CD8-positive, alpha-beta T cell (primary cell): ENCODE measurements at regions of chr10 and their contacts with region 1.

Region 1: DNA sequence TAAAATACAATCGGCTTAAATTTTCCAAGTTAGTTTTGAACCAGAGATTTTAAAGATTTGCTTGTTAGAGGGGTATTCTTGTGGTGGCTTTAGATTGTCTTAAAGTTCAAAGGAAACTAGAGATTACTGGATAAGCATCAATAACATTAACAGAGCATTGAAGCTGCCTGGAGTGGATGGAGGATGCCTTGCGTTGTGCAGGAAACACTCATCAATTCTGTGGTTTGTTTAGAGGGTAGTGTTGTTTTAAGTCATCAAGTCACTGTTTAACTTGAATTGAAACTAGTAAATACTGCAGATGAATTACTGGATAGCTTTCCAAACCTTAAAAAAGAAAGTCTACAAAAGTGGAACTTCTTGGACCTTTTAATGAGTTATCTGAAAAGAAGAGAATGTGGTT is 218.6 kb downstream of the CELF2 start:
- DNase-seq: peak in 3 of 9 experiments; percentile 47 to 70 (median 48)
- ATAC-seq: peak; percentile 62
- H3K4me3 ChIP-seq: no peak overlapping the region
- H3K4me3 Mint-ChIP-seq: peak overlapping the region; percentile 42
- H3K27ac ChIP-seq: peak overlapping the region; percentile 14 to 67
- H3K27ac Mint-ChIP-seq: peak overlapping the region; percentile 91
- H3K4me1 ChIP-seq: peaks cover 78% of the 10 kb centered on the region
- H3K4me1 Mint-ChIP-seq: peaks cover 96% of the 10 kb centered on the region
- H3K27me3 ChIP-seq: no peaks in the 10 kb centered on the region
- H3K27me3 Mint-ChIP-seq: no peaks in the 10 kb centered on the region
- CTCF ChIP-seq: no peak

Region 2: DNA sequence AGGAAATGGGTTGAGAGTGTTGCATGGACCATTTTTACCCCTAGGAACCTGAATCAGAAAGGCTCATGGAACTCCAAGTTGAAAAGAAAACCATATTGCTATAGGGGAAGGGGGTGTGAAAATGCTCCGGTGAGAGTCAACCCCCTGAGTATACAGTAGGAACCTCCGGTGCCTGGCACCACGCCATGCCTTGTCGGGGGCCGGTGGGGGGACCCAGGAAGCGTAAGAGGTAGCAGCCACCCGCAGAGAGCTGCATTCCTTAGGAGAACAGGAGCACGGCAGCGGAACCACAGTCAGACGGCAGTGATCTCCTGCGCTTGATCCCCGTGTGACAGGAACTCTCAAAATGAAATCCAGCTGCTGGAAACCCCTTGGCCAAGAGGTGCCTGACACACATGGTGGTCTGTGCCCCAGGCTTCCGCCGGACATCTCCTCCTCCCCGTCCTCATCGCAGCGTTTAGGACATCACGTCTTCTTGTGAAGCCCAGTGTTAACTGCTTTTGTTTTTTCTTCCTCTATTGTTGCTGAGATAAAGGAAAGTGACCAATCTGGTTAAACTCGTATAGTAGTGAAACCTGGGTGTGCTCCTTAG is 31.8 kb before region 1 on chr10:
- CTCF ChIA-PET with region 1: no interaction called
- POLR2A ChIA-PET with region 1: no interaction called
- intact Hi-C with region 1: loop called in 1 of 2 experiments (anchors 5 kb)
- DNase-seq: peak in 4 of 9 experiments; percentile 35 to 64 (median 48)
- ATAC-seq: peak; percentile 37
- H3K4me3 ChIP-seq: no peak overlapping the region
- H3K4me3 Mint-ChIP-seq: peak overlapping the region; percentile 35
- H3K27ac ChIP-seq: peak overlapping the region in 1 of 2 experiments; percentile 64
- H3K27ac Mint-ChIP-seq: peak overlapping the region; percentile 89
- H3K4me1 ChIP-seq: peaks cover 88% of the 10 kb centered on the region
- H3K4me1 Mint-ChIP-seq: peaks cover 98% of the 10 kb centered on the region
- H3K27me3 ChIP-seq: no peaks in the 10 kb centered on the region
- H3K27me3 Mint-ChIP-seq: no peaks in the 10 kb centered on the region
- CTCF ChIP-seq: no peak

Region 3: DNA sequence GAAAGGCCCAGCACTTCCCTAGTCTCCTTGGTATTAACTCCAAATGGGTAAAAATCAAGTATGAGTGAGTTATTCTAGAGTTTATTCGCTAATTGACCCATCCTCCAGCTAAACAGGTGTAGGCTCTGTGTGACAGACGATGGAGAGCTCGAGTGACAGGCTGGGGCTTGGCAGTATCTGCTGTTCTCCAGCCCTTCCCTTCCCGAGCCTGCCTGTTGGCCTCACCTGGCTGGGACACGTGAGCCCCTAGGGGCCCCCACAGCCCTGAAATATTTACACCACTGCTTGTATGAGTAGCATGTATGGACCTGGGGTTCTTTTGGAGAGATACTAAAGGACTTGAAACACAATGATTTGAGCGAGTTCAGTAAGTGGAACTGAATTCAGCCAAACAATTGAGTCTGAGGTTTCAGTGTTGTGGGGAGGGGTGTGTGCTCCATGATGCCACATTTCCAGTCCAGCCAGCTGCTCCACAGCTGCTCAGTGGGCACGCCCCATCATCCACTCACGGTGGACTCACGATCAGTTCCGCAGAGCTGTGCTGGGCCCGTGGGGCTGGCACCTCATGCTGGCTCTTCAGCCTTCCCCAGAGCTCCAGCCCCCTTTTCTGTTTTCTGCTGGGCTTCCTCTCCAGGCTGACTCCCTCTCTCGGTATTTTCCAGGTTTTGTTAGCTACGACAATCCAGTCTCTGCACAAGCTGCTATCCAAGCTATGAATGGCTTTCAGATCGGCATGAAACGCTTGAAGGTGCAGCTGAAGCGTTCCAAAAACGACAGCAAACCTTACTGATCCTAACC is 92.2 kb after region 1 on chr10:
- CTCF ChIA-PET with region 1: no interaction called
- POLR2A ChIA-PET with region 1: no interaction called
- intact Hi-C with region 1: no loop called
- DNase-seq: no peak
- ATAC-seq: no peak
- H3K4me3 ChIP-seq: no peak overlapping the region
- H3K4me3 Mint-ChIP-seq: no peak overlapping the region
- H3K27ac ChIP-seq: peak overlapping the region; percentile 3 to 4
- H3K27ac Mint-ChIP-seq: peak overlapping the region; percentile 86
- H3K4me1 ChIP-seq: peaks cover 18% of the 10 kb centered on the region
- H3K4me1 Mint-ChIP-seq: peaks cover 58% of the 10 kb centered on the region
- H3K27me3 ChIP-seq: no peaks in the 10 kb centered on the region
- H3K27me3 Mint-ChIP-seq: no peaks in the 10 kb centered on the region
- CTCF ChIP-seq: no peak

Region 4: DNA sequence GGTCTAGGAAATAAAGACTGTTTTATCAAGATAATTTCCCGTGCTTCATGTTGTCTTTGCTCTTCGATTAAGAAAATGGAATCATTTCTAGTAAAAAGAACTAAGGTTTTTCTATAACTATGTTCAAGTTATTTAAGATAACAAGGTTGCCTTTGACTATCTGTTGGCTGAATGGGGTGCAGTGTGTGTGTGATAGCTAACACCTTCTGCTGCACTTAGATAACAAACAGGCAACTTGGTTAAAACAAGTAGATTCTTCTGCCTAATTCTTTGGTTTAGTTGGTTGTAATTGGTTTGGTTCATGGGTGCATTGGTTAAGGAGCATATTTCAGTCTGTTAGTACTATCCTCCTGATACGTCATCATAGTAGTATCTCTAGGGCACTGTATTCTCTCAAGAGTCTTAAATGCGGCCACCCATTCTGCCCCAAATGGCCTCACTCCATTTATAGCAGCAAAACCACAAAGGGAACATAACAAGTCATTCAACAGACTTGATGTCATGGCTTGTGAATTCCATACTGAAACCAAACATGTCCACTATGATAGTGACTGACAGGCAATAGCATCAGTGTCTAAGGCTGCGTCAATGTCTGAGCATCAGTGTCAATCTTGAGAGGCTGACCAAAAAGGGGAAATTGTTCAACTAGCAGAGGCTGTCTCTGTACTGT is 1709.6 kb after region 1 on chr10:
- CTCF ChIA-PET with region 1: no interaction called
- POLR2A ChIA-PET with region 1: no interaction called
- intact Hi-C with region 1: no loop called
- DNase-seq: no peak
- ATAC-seq: no peak
- H3K4me3 ChIP-seq: no peak overlapping the region
- H3K4me3 Mint-ChIP-seq: no peak overlapping the region
- H3K27ac ChIP-seq: no peak overlapping the region
- H3K27ac Mint-ChIP-seq: no peak overlapping the region
- H3K4me1 ChIP-seq: no peaks in the 10 kb centered on the region
- H3K4me1 Mint-ChIP-seq: no peaks in the 10 kb centered on the region
- H3K27me3 ChIP-seq: no peaks in the 10 kb centered on the region
- H3K27me3 Mint-ChIP-seq: no peaks in the 10 kb centered on the region
- CTCF ChIP-seq: no peak